Endothelial cell of umbilical vein (primary cell): ENCODE measurements at regions of chr19 and their contacts with region 1.

Region 1: GRCh38 chr19:2475702-2476450 is at the start of gene GADD45B:
- DNase-seq: peak; percentile 98
- H3K4me3 ChIP-seq: peak within 1 kb of the TSS; percentile 83 to 89 (median 89)
- H3K27ac ChIP-seq: peak within 1 kb of the TSS; percentile 90
- H3K4me1 ChIP-seq: peaks cover 19% of the 10 kb centered on the region
- H3K27me3 ChIP-seq: no peaks in the 10 kb centered on the region
- CTCF ChIP-seq: no peak
- POLR2A ChIP-seq: peak; percentile 100
- total RNA-seq, gene GADD45B: 61.3 and 75.9 TPM in 2 replicates

Region 2: DNA sequence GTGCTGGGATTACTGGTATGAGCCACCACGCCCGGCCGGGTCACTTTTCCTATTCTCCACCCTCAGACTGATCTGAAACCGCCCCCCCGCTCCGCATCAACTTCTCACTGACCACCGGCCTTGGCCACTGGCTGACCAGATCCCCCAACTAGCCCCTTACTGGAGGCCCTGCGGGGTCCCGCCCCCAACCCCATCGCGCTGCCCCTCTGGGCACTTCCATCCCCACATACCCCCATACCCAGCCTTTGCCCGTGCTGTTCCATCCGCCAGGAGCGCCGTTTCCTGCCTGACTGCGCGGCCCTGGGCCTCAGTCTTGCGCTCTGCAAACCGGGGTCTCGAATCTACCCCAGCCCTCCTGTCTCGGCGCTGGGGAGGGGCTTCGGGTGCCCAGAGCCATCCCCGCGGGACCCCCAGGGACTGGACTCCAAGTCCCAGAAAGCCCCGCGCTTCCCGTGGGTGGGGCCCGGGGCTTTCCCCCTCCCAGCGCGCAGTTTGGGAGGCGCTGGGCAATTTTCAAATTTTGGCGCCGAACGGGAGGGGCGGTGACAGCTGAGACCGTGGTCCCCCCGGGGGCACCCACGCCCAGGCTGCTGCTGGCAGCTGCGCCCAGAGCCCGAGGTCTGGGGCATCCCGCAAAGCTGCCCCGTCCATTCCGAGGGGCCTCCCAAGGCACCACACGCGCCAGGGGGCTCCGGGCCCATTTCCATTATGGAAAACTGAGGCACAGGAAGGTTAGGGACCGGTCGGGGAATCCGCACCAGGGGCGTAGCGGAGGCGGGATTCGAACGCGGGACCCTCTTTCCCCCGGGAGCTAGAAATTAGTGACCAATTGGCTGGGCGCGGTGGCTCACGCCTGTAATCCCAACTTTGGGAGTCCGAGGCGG is 13.9 kb before region 1 on chr19:
- CTCF ChIA-PET with region 1: interaction called, 4 read pairs
- POLR2A ChIA-PET with region 1: interaction called, 29 read pairs
- dilution Hi-C with region 1: no loop called
- intact Hi-C with region 1: no loop called
- DNase-seq: peak; percentile 71
- H3K4me3 ChIP-seq: peak overlapping the region; percentile 38 to 68 (median 60)
- H3K27ac ChIP-seq: peak overlapping the region; percentile 61
- H3K4me1 ChIP-seq: peaks cover 14% of the 10 kb centered on the region
- H3K27me3 ChIP-seq: no peaks in the 10 kb centered on the region
- CTCF ChIP-seq: peak in 1 of 2 donors; percentile 10
- POLR2A ChIP-seq: no peak

Region 3: GRCh38 chr19:2507109-2507508 is 31.2 kb after region 1 on chr19:
- CTCF ChIA-PET with region 1: no interaction called
- POLR2A ChIA-PET with region 1: interaction called, 21 read pairs
- dilution Hi-C with region 1: no loop called
- intact Hi-C with region 1: loop called (anchors 2 kb)
- DNase-seq: peak; percentile 93
- H3K4me3 ChIP-seq: no peak overlapping the region
- H3K27ac ChIP-seq: peak overlapping the region; percentile 86
- H3K4me1 ChIP-seq: peaks cover 8% of the 10 kb centered on the region
- H3K27me3 ChIP-seq: no peaks in the 10 kb centered on the region
- CTCF ChIP-seq: no peak
- POLR2A ChIP-seq: peak; percentile 63

Region 4: DNA sequence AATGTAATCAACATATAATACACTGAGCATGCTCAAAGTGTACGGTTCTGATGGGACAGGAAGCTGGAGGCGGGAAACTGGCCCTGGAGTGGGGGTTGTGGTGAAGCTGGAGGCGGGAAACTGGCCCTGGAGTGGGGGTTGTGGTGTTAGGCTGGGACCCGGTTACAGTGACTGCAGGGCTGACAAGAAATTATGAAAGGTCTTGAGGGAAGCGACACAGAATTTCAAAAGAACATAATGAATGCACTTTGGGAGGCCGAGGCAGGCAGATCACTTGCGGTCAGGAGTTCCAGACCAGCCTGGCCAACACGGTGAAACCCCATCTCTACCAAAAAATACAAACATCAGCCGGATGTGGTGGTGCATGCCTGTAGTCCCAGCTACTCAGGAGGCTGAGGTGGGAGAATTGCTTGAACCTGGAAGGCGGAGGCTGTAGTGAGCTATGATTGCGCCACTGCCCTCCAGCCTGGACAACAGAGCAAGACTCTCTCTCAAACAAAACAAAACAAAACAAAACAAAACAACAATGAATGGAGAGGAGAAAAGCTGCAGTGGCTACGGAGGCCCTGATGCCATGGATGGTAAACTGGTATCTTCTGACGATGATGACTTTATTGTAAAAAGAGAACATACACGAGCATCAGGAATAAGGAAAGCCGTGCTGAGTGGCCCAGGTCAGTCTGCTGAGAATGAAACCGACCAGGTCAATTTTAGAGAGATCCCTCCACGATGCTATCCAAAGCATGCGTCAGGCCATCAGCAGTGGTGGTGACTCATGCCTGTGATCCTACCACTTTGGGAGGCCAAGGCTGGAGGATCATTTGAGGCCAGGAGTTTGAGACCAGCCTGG is 61.9 kb after region 1 on chr19:
- CTCF ChIA-PET with region 1: interaction called, 59 read pairs
- POLR2A ChIA-PET with region 1: interaction called, 253 read pairs
- dilution Hi-C with region 1: no loop called
- intact Hi-C with region 1: loop called (anchors 1 kb)
- DNase-seq: no peak
- H3K4me3 ChIP-seq: no peak overlapping the region
- H3K27ac ChIP-seq: no peak overlapping the region
- H3K4me1 ChIP-seq: peaks cover 45% of the 10 kb centered on the region
- H3K27me3 ChIP-seq: no peaks in the 10 kb centered on the region
- CTCF ChIP-seq: no peak
- POLR2A ChIP-seq: no peak

Region 5: GRCh38 chr19:2578901-2579677 is 103.2 kb after region 1 on chr19:
- CTCF ChIA-PET with region 1: interaction called, 103 read pairs
- POLR2A ChIA-PET with region 1: interaction called, 165 read pairs
- dilution Hi-C with region 1: no loop called
- intact Hi-C with region 1: loop called (anchors 1 kb)
- DNase-seq: peak; percentile 97
- H3K4me3 ChIP-seq: peak overlapping the region; percentile 23 to 46 (median 26)
- H3K27ac ChIP-seq: peak overlapping the region; percentile 93
- H3K4me1 ChIP-seq: peaks cover 22% of the 10 kb centered on the region
- H3K27me3 ChIP-seq: no peaks in the 10 kb centered on the region
- CTCF ChIP-seq: peak; percentile 93 to 97
- POLR2A ChIP-seq: no peak

Region 6: DNA sequence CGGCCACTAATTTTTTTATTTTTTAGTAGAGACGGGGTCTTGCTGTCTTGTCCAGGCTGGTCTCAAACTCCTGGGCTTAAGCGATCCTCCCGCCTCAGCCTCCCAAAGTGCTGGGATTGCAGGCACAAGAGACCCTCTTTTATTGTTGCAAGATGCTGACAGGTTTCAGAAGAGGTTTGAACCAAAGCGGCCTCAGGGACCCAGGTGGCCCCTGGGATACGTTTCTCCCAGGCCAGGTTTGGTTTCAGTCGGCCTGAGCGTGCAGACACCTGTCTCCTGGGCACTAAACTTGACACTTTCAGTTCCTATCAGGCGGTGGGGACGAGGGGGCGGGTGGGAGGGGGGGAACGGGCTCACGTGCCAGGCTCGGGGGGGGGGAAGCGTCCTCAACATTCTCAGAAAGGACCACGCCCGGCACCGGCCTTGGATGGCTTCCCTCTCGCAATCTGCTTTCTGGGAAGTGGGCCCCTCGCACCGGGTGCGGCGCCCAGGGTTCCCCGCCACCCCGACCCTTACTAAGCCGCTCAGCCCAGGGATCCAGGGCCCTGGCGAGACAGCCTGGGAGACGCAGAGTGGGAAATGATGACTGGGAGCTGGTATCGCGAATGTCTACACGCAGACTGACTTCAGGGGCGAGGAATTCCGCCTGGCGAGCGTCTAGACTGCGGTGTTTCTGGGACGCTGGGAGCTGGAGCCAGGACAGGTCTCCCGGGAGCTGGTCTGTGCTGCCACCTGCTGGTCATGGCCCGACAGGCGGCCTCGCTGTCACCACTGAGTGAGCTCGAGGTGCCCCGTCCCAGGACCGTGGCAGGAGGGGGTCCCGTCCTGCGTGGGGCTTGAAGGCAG is 135.0 kb after region 1 on chr19:
- CTCF ChIA-PET with region 1: interaction called, 209 read pairs
- POLR2A ChIA-PET with region 1: interaction called, 81 read pairs
- dilution Hi-C with region 1: no loop called
- intact Hi-C with region 1: loop called (anchors 1 kb)
- DNase-seq: peak; percentile 85
- H3K4me3 ChIP-seq: peak overlapping the region in 1 of 3 experiments; percentile 9
- H3K27ac ChIP-seq: peak overlapping the region; percentile 62
- H3K4me1 ChIP-seq: peaks cover under 1% of the 10 kb centered on the region
- H3K27me3 ChIP-seq: no peaks in the 10 kb centered on the region
- CTCF ChIP-seq: peak; percentile 96 to 98
- POLR2A ChIP-seq: no peak

Region 7: DNA sequence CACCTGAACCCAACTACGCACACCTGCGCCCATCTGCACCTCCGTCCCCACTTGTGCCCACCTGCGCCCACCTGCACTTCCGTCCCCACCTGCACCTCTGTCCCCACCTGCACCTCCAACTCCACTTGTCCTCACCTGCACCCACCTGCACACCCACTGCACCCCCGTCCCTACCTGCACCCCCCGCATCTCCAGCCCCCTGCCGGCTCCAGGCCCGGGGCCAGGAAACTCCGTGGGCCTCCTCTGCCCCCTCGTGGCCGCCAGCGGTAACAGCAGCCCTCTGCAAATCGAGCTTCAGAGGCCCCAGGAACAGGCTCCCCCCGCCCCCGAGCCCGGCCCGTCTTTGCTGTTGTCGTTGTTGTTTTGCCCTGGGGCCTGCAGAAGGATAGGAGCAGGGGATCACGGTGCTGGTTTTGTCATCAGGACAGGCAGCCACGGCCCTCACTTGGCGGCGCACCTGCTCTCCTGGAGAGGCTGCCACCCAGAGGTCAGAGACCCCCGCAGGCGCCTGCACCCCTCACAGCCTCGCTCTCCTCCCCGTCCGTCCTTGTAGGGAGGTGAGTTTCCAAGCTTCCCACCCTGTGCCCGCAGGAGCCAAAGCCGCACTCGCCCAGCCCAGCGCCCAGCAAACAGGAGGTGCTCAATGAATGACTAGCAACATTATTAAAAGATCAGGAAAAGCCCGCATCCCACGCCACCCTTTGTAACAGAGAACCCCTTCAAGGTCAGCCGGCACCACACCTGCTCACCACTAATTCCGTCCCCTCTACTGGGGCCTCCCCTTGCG is 161.2 kb after region 1 on chr19:
- CTCF ChIA-PET with region 1: interaction called, 26 read pairs
- POLR2A ChIA-PET with region 1: interaction called, 10 read pairs
- dilution Hi-C with region 1: no loop called
- intact Hi-C with region 1: loop called (anchors 1 kb)
- DNase-seq: peak; percentile 43
- H3K4me3 ChIP-seq: no peak overlapping the region
- H3K27ac ChIP-seq: no peak overlapping the region
- H3K4me1 ChIP-seq: no peaks in the 10 kb centered on the region
- H3K27me3 ChIP-seq: no peaks in the 10 kb centered on the region
- CTCF ChIP-seq: peak; percentile 75 to 93
- POLR2A ChIP-seq: no peak